Tibial artery (tissue), 4 donors: ENCODE measurements at regions of chr2 and their contacts with region 1.

Region 1: DNA sequence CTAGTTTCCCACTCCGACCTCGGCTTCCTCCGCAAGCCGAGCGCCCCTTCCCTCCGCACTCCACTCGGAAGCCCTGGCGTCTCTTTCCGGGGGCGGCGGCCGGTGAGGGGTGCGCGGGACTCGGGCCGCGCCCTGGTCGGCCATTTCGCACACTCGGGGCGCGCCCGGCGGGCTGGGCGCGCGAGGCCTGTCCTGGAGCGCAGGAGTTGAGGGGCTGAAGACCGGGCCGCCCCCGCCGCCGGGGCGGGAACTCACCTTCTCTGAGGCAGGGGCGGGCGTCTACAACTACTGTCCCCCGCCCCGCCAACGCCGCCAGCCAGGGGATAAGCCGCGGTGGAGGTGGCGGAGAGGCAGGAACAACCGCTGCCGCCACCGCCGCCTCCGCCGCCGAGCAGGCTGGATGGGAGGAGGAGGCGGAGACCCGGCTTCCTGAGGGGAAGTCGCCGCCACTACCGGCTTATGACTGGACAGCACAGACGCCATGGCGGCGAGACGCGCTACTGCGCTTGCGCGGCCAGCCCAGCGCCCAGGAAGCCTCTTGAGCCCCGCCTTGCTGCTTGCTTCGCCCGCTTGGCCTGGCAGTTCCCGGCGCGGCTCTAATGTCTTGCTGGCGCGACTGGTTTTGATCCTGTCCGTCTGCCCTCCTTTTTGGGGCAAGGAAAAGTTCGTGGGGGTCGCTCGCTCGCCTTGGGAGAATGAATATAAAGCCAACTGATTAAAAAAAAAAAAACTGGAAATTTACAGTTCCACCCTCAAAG is at the start of gene KRCC1:
- DNase-seq: peak; percentile 94 to 98
- H3K4me3 ChIP-seq: peak within 1 kb of the TSS; percentile 86 to 96
- H3K27ac ChIP-seq: peak within 1 kb of the TSS; percentile 95 to 97
- H3K4me1 ChIP-seq: peaks cover 0 to 25% (median 17%) of the 10 kb centered on the region in 4 donors
- H3K27me3 ChIP-seq: no peaks in the 10 kb centered on the region
- CTCF ChIP-seq: peak; percentile 12 to 16

Region 2: DNA sequence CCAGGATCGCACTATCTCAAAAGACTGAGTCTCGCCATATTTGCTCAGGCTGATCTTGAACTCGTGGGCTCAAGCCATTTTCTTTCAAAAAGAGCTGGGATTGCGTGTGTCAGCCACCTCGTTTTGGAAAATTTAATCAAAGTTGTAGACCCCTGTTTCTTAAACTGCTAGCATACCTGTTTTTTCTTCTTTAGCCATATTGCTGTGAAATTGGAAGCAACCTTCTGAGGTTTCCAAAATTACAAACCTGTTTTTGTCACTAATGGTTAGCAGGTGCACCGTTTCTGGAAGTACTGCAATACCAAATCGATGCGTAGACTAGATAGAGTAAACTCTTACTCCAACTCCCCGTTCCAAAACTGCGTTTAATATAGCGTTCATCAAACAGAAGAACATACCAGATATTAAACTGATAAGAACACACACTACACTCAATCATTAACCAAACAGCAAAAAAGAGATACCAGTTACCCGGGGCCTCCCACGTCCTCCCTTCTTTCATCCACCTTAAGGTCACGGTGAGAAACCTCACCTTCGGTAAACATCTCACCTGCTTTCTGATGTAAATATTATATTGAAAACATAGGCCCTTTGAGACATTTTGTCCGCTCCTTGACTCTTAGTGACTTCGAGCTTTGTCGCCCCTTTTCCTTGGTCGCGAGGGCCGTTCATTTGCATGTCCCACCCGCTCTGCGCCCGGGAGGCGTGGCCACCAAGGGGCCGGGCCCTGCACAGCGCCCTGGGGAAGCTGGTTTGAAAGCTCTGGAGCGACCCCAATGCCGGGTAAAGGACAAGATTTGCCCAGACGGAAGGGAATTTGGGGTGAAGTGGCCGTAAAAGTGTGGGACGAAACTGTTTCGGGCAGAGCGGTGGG is 39.2 kb before region 1 on chr2 and contains the start of gene RNU2-63P:
- intact Hi-C with region 1: loop called (anchors 5 kb)
- DNase-seq: peak; percentile 52 to 82
- H3K4me3 ChIP-seq: peak within 1 kb of the TSS; percentile 47 to 57
- H3K27ac ChIP-seq: peak within 1 kb of the TSS; percentile 48 to 66
- H3K4me1 ChIP-seq: peaks cover 0 to 3% (median 3%) of the 10 kb centered on the region in 4 donors
- H3K27me3 ChIP-seq: no peaks in the 10 kb centered on the region
- CTCF ChIP-seq: no peak

Region 3: DNA sequence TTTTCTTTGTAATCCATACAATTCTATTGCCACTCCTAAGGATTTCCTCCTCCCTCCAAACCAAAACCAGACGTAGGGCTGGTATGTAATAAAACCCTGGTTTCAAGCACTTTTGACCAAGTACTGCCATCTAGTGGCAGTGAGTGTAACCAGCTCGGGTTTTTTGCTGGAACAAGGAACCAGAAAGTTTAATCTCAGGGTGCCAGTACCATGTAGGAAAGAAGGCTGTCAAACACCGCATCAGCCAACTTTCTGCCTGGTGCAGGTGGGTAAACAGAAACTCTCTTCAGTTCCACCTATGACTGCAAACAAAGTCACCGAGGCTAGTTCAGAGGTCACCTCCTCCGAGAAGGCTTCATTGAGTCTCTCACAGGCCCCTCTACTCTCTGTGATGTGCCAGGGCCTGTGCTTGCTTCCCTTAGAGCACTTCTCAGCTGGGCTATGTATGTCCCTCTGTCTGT is 104.4 kb after region 1 on chr2:
- intact Hi-C with region 1: loop called (anchors 5 kb)
- DNase-seq: peak in 1 of 2 donors; percentile 53
- H3K4me3 ChIP-seq: no peak overlapping the region
- H3K27ac ChIP-seq: no peak overlapping the region
- H3K4me1 ChIP-seq: no peaks in the 10 kb centered on the region
- H3K27me3 ChIP-seq: peaks cover 0 to 5% of the 10 kb centered on the region in 2 donors
- CTCF ChIP-seq: peak; percentile 68 to 81

Region 4: DNA sequence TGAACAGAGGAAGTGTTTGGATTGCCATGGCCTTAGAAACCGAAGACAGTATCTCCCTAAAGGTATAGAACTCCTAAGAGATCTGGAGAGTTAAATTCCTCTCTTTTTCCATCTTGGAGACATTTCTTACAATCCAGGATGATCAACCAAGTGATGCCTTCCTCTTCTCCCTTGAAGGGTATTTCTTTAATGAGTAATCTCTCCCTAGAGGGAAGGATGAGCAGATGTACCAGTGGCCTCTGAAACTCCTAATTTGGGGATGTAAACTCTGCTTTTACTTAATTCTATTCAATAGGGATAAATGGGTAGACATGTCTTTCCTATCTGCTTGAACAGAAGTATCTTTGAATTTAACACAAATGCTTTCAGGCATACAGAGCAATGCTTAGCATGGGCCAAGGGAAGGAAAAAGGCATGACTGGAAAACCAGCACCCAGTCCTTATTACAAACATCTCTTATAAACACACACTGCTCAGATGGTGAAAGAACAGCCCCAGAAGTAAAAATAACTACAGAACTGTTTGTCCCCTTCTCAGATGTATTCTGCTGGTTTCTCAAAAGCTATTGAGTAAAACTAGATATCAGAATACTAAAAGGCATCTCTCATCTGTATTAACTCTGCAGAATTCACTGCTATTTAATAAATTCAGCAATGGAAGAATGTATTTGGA is 109.9 kb after region 1 on chr2:
- intact Hi-C with region 1: loop called (anchors 5 kb)
- DNase-seq: no peak
- H3K4me3 ChIP-seq: no peak overlapping the region
- H3K27ac ChIP-seq: no peak overlapping the region
- H3K4me1 ChIP-seq: peaks cover 0 to 2% (median 0%) of the 10 kb centered on the region in 4 donors
- H3K27me3 ChIP-seq: peaks cover 0 to 2% of the 10 kb centered on the region in 2 donors
- CTCF ChIP-seq: no peak